HCT116 (cell line): ENCODE measurements at regions of chr1 and their contacts with region 1.

Region 1: GRCh38 chr1:181088079-181089016 is at the start of gene IER5:
- DNase-seq: peak; percentile 94
- ATAC-seq: peak; percentile 83
- H3K4me3 ChIP-seq: peak within 1 kb of the TSS; percentile 66 to 74
- H3K27ac ChIP-seq: peak within 1 kb of the TSS; percentile 82
- H3K4me1 ChIP-seq: peaks cover 21 to 44% of the 10 kb centered on the region in 2 experiments
- H3K27me3 ChIP-seq: no peaks in the 10 kb centered on the region
- CTCF ChIP-seq: no peak
- POLR2A ChIP-seq: peak; percentile 99
- RAD21 ChIP-seq: no peak; the same call in 1 of the 2 replicates
- total RNA-seq, gene IER5: 30.5 TPM

Region 2: DNA sequence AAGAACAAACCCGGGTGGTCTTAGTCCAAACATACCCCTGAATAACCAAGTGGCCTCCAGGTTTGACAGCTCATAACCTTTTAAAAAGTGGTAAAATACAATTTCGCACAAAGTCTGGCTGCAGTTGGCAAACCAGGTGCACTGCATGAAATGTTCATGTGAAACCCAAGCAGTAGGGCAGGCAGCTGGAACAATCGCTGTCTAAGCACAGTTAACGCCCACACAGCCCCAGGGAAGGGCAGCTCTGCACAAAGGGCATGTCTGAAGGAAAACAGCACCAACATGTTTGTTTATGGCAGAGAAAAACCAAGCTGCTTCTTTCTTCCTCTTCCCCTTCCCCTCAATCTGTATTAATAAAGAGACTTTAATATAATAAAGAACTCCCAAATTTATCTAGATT is 126.2 kb before region 1 on chr1:
- CTCF ChIA-PET with region 1: no interaction called
- POLR2A ChIA-PET with region 1: no interaction called
- RAD21 ChIA-PET with region 1: no interaction called
- intact Hi-C with region 1: no loop called
- DNase-seq: no peak
- ATAC-seq: no peak
- H3K4me3 ChIP-seq: no peak overlapping the region
- H3K27ac ChIP-seq: no peak overlapping the region
- H3K4me1 ChIP-seq: no peaks in the 10 kb centered on the region
- H3K27me3 ChIP-seq: no peaks in the 10 kb centered on the region
- CTCF ChIP-seq: no peak
- POLR2A ChIP-seq: no peak
- RAD21 ChIP-seq: no peak

Region 3: DNA sequence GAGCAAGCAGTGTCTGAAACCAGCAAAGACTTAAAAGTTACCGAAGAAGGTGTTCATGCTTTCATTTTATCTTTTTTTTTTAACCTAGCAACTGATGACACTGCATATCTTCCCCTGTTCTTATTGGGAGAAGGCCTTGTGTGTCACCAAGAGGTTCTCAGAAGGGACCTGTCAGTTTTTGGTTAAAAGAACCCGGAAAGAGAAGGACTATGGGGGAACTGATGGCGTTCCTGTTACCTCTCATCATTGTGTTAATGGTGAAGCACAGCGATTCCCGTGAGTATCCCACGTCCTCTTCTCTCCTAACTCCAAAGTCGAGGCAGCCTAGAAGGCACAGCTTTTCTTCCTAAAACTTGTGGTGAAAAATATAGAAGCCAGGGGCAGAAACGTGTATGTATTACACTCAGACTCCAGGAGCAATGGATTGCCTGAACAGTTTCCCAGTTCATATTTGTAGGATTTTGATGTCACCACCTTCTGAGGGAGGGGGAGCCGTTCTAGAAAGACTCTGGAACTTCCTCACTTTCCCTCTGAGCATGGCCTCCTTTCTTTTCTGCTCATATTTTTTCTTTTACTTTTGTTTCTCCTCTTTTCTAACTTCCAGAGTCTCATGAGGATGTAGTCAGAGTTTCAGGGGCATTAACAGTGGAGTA is 54.4 kb before region 1 on chr1 and contains the start of gene MR1:
- CTCF ChIA-PET with region 1: interaction called, 5 read pairs
- POLR2A ChIA-PET with region 1: interaction called, 3 read pairs
- RAD21 ChIA-PET with region 1: no interaction called
- intact Hi-C with region 1: loop called (anchors 5 kb)
- DNase-seq: peak; percentile 81
- ATAC-seq: peak; percentile 81
- H3K4me3 ChIP-seq: peak within 1 kb of the TSS; percentile 49 to 59
- H3K27ac ChIP-seq: peak within 1 kb of the TSS; percentile 9
- H3K4me1 ChIP-seq: peaks cover 2 to 18% of the 10 kb centered on the region in 2 experiments; a peak in 3 of 4 replicates
- H3K27me3 ChIP-seq: no peaks in the 10 kb centered on the region
- CTCF ChIP-seq: no peak
- POLR2A ChIP-seq: no peak
- RAD21 ChIP-seq: no peak
- total RNA-seq, gene MR1: 6.6 TPM

Region 4: GRCh38 chr1:181099152-181100014 is 11.0 kb after region 1 on chr1:
- CTCF ChIA-PET with region 1: interaction called, 3 read pairs
- POLR2A ChIA-PET with region 1: interaction called, 10 read pairs
- RAD21 ChIA-PET with region 1: no interaction called
- intact Hi-C with region 1: loop called (anchors 2 kb)
- DNase-seq: no peak
- ATAC-seq: no peak
- H3K4me3 ChIP-seq: no peak overlapping the region
- H3K27ac ChIP-seq: no peak overlapping the region
- H3K4me1 ChIP-seq: peaks cover 56% of the 10 kb centered on the region in 2 experiments
- H3K27me3 ChIP-seq: no peaks in the 10 kb centered on the region
- CTCF ChIP-seq: no peak
- POLR2A ChIP-seq: no peak
- RAD21 ChIP-seq: no peak

Region 5: GRCh38 chr1:181105134-181106021 is 17.0 kb after region 1 on chr1:
- CTCF ChIA-PET with region 1: interaction called, 6 read pairs
- POLR2A ChIA-PET with region 1: interaction called, 10 read pairs
- RAD21 ChIA-PET with region 1: interaction called in 1 of 2 experiments, 3 read pairs
- intact Hi-C with region 1: loop called (anchors 2 kb)
- DNase-seq: peak; percentile 56
- ATAC-seq: peak; percentile 88
- H3K4me3 ChIP-seq: peak overlapping the region; percentile 61 to 66
- H3K27ac ChIP-seq: peak overlapping the region; percentile 80
- H3K4me1 ChIP-seq: peaks cover 61 to 74% of the 10 kb centered on the region in 2 experiments
- H3K27me3 ChIP-seq: no peaks in the 10 kb centered on the region
- CTCF ChIP-seq: no peak
- POLR2A ChIP-seq: no peak
- RAD21 ChIP-seq: no peak

Region 6: GRCh38 chr1:181134543-181135362 is 46.4 kb after region 1 on chr1:
- CTCF ChIA-PET with region 1: interaction called, 10 read pairs
- POLR2A ChIA-PET with region 1: interaction called, 7 read pairs
- RAD21 ChIA-PET with region 1: interaction called in 1 of 2 experiments, 5 read pairs
- intact Hi-C with region 1: no loop called
- DNase-seq: no peak
- ATAC-seq: peak; percentile 70
- H3K4me3 ChIP-seq: no peak overlapping the region
- H3K27ac ChIP-seq: peak overlapping the region; percentile 76
- H3K4me1 ChIP-seq: peaks cover 29 to 59% of the 10 kb centered on the region in 2 experiments
- H3K27me3 ChIP-seq: no peaks in the 10 kb centered on the region
- CTCF ChIP-seq: no peak
- POLR2A ChIP-seq: no peak
- RAD21 ChIP-seq: no peak